ENCODE measurements at regions of chrX and their contacts with region 1.

Region 1: GRCh38 chrX:2640275-2641150 is 50.6 kb upstream of the CD99 start:
- DNase-seq: no peak
- H3K4me3 ChIP-seq: no peak overlapping the region
- H3K4me3 Mint-ChIP-seq: no peak overlapping the region
- H3K27ac ChIP-seq: no peak overlapping the region
- H3K27ac Mint-ChIP-seq: no peak overlapping the region
- H3K4me1 ChIP-seq: no peaks in the 10 kb centered on the region
- H3K4me1 Mint-ChIP-seq: peaks cover 0 to 7% (median 3%) of the 10 kb centered on the region in 4 donors
- H3K27me3 ChIP-seq: no peaks in the 10 kb centered on the region
- H3K27me3 Mint-ChIP-seq: no peaks in the 10 kb centered on the region

Region 2: GRCh38 chrX:2608638-2609430 is 31.7 kb before region 1 on chrX:
- CTCF ChIA-PET with region 1: no interaction called
- POLR2A ChIA-PET with region 1: no interaction called
- intact Hi-C with region 1: no loop called
- DNase-seq: peak; percentile 78 to 87 (median 84)
- H3K4me3 ChIP-seq: peak overlapping the region; percentile 30 to 90
- H3K4me3 Mint-ChIP-seq: peak overlapping the region; percentile 91 to 97 (median 93)
- H3K27ac ChIP-seq: peak overlapping the region; percentile 59
- H3K27ac Mint-ChIP-seq: peak overlapping the region; percentile 84 to 94 (median 88)
- H3K4me1 ChIP-seq: peaks cover 35% of the 10 kb centered on the region
- H3K4me1 Mint-ChIP-seq: peaks cover 30 to 74% (median 52%) of the 10 kb centered on the region in 4 donors
- H3K27me3 ChIP-seq: no peaks in the 10 kb centered on the region
- H3K27me3 Mint-ChIP-seq: no peaks in the 10 kb centered on the region

Region 3: GRCh38 chrX:2707334-2707760 is 66.8 kb after region 1 on chrX:
- CTCF ChIA-PET with region 1: no interaction called
- POLR2A ChIA-PET with region 1: no interaction called
- intact Hi-C with region 1: loop called (anchors 1 kb)
- DNase-seq: peak in 4 of 5 donors; percentile 22 to 82 (median 38)
- H3K4me3 ChIP-seq: no peak overlapping the region
- H3K4me3 Mint-ChIP-seq: peak overlapping the region in 7 of 8 donors; percentile 27 to 83 (median 61)
- H3K27ac ChIP-seq: peak overlapping the region; percentile 29
- H3K27ac Mint-ChIP-seq: peak overlapping the region; percentile 13 to 90 (median 85)
- H3K4me1 ChIP-seq: peaks cover 80% of the 10 kb centered on the region
- H3K4me1 Mint-ChIP-seq: peaks cover 61 to 89% (median 77%) of the 10 kb centered on the region in 4 donors
- H3K27me3 ChIP-seq: no peaks in the 10 kb centered on the region
- H3K27me3 Mint-ChIP-seq: no peaks in the 10 kb centered on the region

Region 4: DNA sequence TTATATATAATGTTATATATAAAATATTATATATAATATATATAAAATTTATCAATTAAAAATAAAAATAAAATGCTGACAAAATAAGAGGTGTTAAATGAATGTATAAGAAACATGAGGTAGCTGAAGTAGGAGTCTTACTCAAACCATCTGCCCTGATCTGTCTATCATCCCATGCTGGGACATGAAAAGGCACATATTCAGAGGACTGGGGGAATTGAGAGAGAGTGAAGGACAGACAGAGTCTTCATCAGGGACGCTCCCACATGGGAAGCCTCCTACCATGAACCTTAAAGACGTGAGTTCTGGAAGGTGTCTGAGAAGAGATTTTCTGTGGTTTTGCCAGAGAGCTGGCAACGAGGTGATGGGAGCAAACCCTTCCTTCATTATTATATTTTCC is 396.7 kb after region 1 on chrX:
- CTCF ChIA-PET with region 1: no interaction called
- POLR2A ChIA-PET with region 1: no interaction called
- intact Hi-C with region 1: loop called (anchors 10 kb)
- DNase-seq: no peak
- H3K4me3 ChIP-seq: no peak overlapping the region
- H3K4me3 Mint-ChIP-seq: no peak overlapping the region
- H3K27ac ChIP-seq: no peak overlapping the region
- H3K27ac Mint-ChIP-seq: no peak overlapping the region
- H3K4me1 ChIP-seq: no peaks in the 10 kb centered on the region
- H3K4me1 Mint-ChIP-seq: no peaks in the 10 kb centered on the region
- H3K27me3 ChIP-seq: no peaks in the 10 kb centered on the region
- H3K27me3 Mint-ChIP-seq: no peaks in the 10 kb centered on the region